ENCODE measurements at regions of chr5 and their contacts with region 1.

Region 1: GRCh38 chr5:80093796-80094195 is 58.6 kb downstream of the THBS4 start:
- DNase-seq: no peak
- ATAC-seq: no peak

Region 2: GRCh38 chr5:79947567-79947966 is 146.2 kb before region 1 on chr5:
- intact Hi-C with region 1: no loop called
- DNase-seq: no peak
- ATAC-seq: peak; percentile 31

Region 3: GRCh38 chr5:80275347-80275746 is 181.6 kb after region 1 on chr5:
- intact Hi-C with region 1: loop called (anchors 2 kb)
- DNase-seq: no peak
- ATAC-seq: no peak

Region 4: DNA sequence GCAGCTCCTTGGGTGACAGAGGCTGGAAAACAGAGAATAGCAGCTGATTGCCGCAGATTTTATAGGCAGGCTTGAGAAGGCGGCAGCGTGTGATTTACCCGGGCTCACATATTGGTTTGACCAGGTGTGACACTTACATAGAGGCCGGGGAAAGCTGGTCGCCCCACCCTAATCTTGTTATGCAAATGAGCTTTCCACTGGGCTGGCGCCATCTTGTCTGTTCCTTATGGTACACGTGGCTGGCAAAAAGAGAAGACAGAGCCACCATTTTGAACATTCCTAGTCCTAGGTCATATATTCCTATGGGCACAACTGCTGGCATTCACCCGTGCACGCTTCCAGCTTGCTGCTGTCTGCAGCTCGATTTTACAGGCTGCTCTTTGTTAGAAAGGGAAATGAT is 214.7 kb after region 1 on chr5:
- intact Hi-C with region 1: loop called (anchors 2 kb)
- DNase-seq: no peak
- ATAC-seq: no peak

Measured in Right ventricle myocardium inferior (tissue), 1 donor.